Activated CD8-positive, alpha-beta T cell treated with anti-CD3 and anti-CD28 coated beads for 36 hours (primary cell): ENCODE measurements at regions of chr5 and their contacts with region 1.

Region 1: GRCh38 chr5:96790961-96791504 is 16.7 kb downstream of the ERAP1 start:
- DNase-seq: no peak
- ATAC-seq: no peak
- H3K4me3 Mint-ChIP-seq: no peak overlapping the region
- H3K27ac Mint-ChIP-seq: peak overlapping the region; percentile 62
- H3K4me1 Mint-ChIP-seq: peaks cover 26% of the 10 kb centered on the region
- H3K27me3 Mint-ChIP-seq: no peaks in the 10 kb centered on the region
- CTCF ChIP-seq: no peak

Region 2: DNA sequence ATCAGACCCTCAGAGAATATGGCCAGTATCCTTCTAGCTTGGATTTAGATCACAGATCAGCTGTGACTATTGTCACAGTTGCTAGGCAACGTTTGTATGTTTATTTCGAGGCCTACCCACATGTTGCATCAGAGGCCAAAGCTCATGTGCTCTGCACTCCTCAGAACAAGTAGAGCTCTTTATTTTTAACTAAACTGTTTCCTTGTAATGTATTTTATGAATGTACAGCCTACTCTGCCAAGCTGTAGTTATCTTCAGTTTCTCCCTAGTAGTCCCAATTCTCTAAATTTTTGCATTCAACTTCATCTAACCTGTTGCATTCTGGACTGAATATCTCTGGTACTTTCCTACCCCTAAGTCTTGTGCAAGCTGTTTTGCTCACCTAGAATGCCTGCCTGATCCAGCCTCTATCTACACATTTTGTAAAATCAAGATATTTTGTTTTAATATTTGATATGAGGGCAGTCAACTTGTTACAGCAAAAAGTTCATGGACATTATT is 76.0 kb before region 1 on chr5:
- CTCF ChIA-PET with region 1: no interaction called
- POLR2A ChIA-PET with region 1: no interaction called
- intact Hi-C with region 1: no loop called
- DNase-seq: peak; percentile 56
- ATAC-seq: peak; percentile 77
- H3K4me3 Mint-ChIP-seq: no peak overlapping the region
- H3K27ac Mint-ChIP-seq: peak overlapping the region; percentile 39
- H3K4me1 Mint-ChIP-seq: peaks cover 18% of the 10 kb centered on the region
- H3K27me3 Mint-ChIP-seq: no peaks in the 10 kb centered on the region
- CTCF ChIP-seq: no peak

Region 3: GRCh38 chr5:96776621-96777020 is 14.4 kb before region 1 on chr5:
- CTCF ChIA-PET with region 1: interaction called, 7 read pairs
- POLR2A ChIA-PET with region 1: interaction called, 15 read pairs
- intact Hi-C with region 1: no loop called
- DNase-seq: no peak
- ATAC-seq: no peak
- H3K4me3 Mint-ChIP-seq: no peak overlapping the region
- H3K27ac Mint-ChIP-seq: no peak overlapping the region
- H3K4me1 Mint-ChIP-seq: peaks cover 11% of the 10 kb centered on the region
- H3K27me3 Mint-ChIP-seq: no peaks in the 10 kb centered on the region
- CTCF ChIP-seq: no peak

Region 4: DNA sequence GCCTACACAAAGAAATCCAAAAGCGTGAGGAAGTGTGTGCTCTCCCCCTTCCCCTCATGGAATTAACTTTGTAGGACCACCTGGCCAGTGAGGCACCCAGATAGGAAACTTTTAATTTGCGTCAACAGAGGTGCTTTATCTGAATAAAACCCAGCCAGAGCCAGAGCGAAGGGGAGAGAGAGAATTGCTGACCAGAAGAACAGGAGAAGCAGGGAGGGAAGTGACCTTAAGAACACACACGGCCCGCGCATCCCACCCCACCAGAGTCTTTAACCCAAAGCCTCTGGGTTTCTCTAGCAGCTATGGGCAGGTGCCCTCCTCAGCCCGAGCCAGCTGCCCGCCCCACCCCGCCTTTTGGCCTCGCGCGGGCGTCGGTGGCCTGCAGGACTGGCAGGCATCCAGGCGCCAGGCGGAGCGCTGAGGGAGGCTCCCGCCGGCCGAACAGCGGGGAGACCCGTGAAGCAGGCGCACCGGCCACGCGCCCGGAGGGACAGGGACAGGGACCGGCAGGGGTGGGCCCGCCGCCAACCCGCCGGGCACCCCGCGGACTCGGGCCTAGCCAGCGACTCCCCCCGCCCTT is 16.1 kb after region 1 on chr5:
- CTCF ChIA-PET with region 1: interaction called, 4 read pairs
- POLR2A ChIA-PET with region 1: interaction called, 18 read pairs
- intact Hi-C with region 1: no loop called
- DNase-seq: peak; percentile 49
- ATAC-seq: peak; percentile 5
- H3K4me3 Mint-ChIP-seq: peak overlapping the region; percentile 97
- H3K27ac Mint-ChIP-seq: peak overlapping the region; percentile 98
- H3K4me1 Mint-ChIP-seq: peaks cover 66% of the 10 kb centered on the region
- H3K27me3 Mint-ChIP-seq: no peaks in the 10 kb centered on the region
- CTCF ChIP-seq: no peak